ENCODE measurements at regions of chr6 and their contacts with region 1.

Region 1: DNA sequence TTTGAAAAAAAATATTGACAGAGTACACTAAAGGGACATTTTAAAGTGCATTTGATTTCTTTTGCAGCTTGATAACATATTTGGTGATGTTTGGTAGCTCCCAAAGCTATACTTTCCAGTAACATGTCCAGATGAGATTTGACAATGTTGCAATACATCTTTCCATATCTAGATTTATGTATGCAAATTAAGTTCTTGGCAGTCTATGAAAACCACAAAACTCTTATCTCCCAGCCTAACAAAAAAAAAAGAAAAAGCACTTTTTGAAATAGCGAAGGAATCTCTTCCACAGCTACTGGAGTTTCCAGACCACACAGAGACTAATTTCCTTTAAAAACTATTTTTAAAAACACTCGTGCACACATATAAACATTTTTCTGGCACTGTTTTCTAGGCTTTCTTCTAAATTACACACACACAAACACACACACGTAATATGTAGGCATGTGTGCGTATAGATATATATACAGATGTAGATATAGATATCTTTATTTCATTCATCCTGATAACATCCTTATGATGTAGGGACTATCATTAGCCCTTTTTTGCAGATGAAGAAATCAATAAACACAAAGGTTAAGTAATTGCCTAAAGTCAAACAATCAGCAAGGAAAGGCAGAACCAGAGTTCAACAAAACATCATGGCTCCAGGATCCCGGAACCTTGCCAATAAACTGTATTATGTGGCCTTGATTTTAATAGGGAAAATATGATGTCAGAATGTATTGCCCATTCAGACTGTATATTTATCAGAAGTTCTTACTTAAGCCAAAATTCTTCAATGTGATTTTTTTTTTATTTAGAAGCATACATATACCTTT is 93.3 kb downstream of the ADGRB3 start:
- DNase-seq: no peak

Region 2: GRCh38 chr6:67717281-67717680 is 1011.1 kb before region 1 on chr6:
- intact Hi-C with region 1: no loop called
- DNase-seq: peak in 1 of 10 donors; percentile 15

Region 3: GRCh38 chr6:68639826-68640490 is 88.4 kb before region 1 on chr6:
- intact Hi-C with region 1: loop called (anchors 10 kb)
- DNase-seq: peak in 1 of 10 donors; percentile 37

Region 4: GRCh38 chr6:69449887-69450286 is 721.5 kb after region 1 on chr6:
- intact Hi-C with region 1: no loop called
- DNase-seq: peak in 2 of 10 donors; percentile 65 to 85